ENCODE measurements at regions of chr9 and their contacts with region 1.

Region 1: DNA sequence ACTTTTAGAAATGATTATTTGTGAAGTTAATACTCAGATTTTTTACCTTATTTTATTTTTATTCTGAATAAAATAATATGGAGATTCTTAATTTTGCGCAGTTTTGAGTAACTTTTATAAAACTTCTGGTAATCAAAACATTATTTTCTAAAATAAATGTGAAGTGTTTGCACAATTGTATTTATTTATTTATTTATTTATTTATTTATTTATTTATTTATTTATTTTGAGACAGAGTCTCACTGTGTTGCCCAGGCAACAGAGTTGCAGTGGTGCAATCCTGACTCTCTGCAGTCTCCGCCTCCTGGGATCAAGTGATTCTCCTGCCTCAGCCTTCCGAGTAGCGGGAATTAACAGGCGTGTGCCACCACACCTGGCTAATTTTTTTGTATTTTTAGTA is 73.5 kb downstream of the RPS6 start:
- DNase-seq: no peak
- H3K4me3 ChIP-seq: no peak overlapping the region
- H3K27ac ChIP-seq: no peak overlapping the region
- H3K4me1 ChIP-seq: no peaks in the 10 kb centered on the region
- H3K27me3 ChIP-seq: no peaks in the 10 kb centered on the region
- CTCF ChIP-seq: no peak
- POLR2A ChIP-seq: no peak

Region 2: DNA sequence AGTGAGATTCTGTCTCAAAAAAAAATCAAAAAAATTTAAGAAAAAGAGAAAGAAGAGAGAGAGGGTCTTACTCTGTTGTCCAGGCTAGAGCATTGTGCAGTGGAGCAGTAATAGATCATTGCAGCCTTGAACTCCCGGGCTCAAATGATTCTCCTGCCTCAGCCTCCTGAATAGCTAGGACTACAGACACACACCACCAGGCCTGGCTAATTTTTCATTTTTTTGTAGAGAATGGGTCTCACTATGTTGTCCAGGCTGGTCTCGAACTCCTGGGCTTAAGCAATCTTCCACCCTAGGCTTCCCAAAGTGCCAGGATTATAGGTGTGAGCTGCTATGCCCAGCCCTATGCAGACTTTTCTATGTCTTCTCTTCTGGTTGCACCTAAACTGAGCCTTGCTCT is 232.3 kb before region 1 on chr9:
- intact Hi-C with region 1: loop called (anchors 5 kb)
- DNase-seq: no peak
- H3K4me3 ChIP-seq: no peak overlapping the region
- H3K27ac ChIP-seq: no peak overlapping the region
- H3K4me1 ChIP-seq: no peaks in the 10 kb centered on the region
- H3K27me3 ChIP-seq: no peaks in the 10 kb centered on the region
- CTCF ChIP-seq: no peak
- POLR2A ChIP-seq: no peak

Region 3: GRCh38 chr9:19281801-19282200 is 24.8 kb before region 1 on chr9:
- intact Hi-C with region 1: no loop called
- DNase-seq: no peak
- H3K4me3 ChIP-seq: no peak overlapping the region
- H3K27ac ChIP-seq: no peak overlapping the region
- H3K4me1 ChIP-seq: peaks cover 0 to 11% of the 10 kb centered on the region in 2 donors
- H3K27me3 ChIP-seq: no peaks in the 10 kb centered on the region
- CTCF ChIP-seq: no peak
- POLR2A ChIP-seq: no peak